ENCODE measurements at regions of chr14 and their contacts with region 1.

Region 1: GRCh38 chr14:90060312-90060964 is 1.4 kb upstream of the KCNK13 start:
- DNase-seq: peak; percentile 49
- H3K4me3 Mint-ChIP-seq: peak overlapping the region; percentile 71
- H3K27ac Mint-ChIP-seq: no peak overlapping the region
- H3K4me1 Mint-ChIP-seq: peaks cover 19% of the 10 kb centered on the region
- H3K27me3 Mint-ChIP-seq: peaks cover 72% of the 10 kb centered on the region

Region 2: DNA sequence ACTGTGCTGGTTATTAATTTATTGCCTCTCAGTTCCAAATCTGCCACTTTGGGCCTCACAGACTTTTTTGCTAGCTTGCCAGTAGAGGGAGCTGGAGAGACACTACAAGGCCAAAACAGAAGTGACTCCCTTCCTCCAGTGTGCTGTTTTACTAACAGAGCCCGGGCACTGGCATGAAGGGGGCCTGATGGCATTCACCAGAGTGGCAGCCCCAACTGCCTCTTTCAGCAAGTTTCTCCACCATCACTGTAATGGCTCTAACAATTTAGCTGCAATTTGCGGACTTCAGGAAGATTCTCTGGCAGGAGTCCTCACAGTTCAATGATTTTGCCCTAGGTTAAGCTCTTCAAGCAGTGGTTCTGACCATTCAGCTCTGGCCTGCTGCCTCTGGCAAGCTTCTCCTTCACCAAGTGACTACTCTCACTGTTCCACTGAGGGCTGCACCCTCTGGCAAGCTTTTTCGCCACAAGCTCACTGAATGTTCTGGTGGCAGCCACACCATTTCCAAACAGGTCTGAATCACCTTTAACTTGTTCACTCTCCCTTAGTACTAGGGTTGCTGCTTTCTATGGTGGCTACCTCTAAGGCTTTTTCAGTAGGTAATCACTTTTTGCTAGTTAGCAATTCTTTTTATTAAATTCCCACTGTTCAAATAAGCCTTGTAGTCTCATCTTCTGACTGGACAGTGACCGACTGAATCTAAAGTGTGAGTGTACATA is 1392.7 kb before region 1 on chr14:
- intact Hi-C with region 1: no loop called
- DNase-seq: peak; percentile 22
- H3K4me3 Mint-ChIP-seq: no peak overlapping the region
- H3K27ac Mint-ChIP-seq: no peak overlapping the region
- H3K4me1 Mint-ChIP-seq: no peaks in the 10 kb centered on the region
- H3K27me3 Mint-ChIP-seq: no peaks in the 10 kb centered on the region

Region 3: DNA sequence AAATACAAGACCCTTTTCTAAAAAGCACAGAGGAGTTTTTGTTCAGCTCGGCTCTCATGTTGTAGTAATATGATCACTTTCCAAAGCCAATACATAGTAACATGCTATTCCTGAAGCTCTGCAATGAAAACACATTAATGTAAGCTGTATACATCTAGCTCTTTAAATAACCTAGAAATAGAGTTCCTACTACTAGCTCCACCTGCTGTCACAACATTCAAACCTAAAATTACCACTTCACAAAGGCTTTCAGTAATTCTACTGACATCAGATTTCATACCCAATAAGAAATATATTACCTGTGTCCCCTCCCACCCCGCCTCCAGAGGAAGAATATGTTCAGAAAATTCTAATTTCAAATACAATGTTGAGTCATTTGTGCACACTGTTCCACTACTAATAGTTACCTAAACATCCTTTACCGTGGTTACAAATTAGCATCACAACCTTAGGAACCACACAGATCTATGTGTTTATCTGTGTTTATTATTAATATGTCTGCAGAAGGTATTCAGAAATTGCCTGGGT is 123.7 kb before region 1 on chr14:
- intact Hi-C with region 1: loop called (anchors 2 kb)
- DNase-seq: no peak
- H3K4me3 Mint-ChIP-seq: no peak overlapping the region
- H3K27ac Mint-ChIP-seq: no peak overlapping the region
- H3K4me1 Mint-ChIP-seq: peaks cover under 1% of the 10 kb centered on the region
- H3K27me3 Mint-ChIP-seq: no peaks in the 10 kb centered on the region

Region 4: GRCh38 chr14:89954070-89955028 is 106.1 kb before region 1 on chr14 and contains the start of gene EFCAB11:
- intact Hi-C with region 1: loop called (anchors 5 kb)
- DNase-seq: peak; percentile 96
- H3K4me3 Mint-ChIP-seq: peak within 1 kb of the TSS; percentile 87
- H3K27ac Mint-ChIP-seq: peak within 1 kb of the TSS; percentile 81
- H3K4me1 Mint-ChIP-seq: peaks cover 43% of the 10 kb centered on the region
- H3K27me3 Mint-ChIP-seq: no peaks in the 10 kb centered on the region
- total RNA-seq, gene EFCAB11: 7.1 and 9.0 TPM in 2 replicates

Region 5: GRCh38 chr14:89973234-89973823 is 87.1 kb before region 1 on chr14:
- intact Hi-C with region 1: loop called (anchors 2 kb)
- DNase-seq: no peak
- H3K4me3 Mint-ChIP-seq: no peak overlapping the region
- H3K27ac Mint-ChIP-seq: no peak overlapping the region
- H3K4me1 Mint-ChIP-seq: peaks cover 4% of the 10 kb centered on the region
- H3K27me3 Mint-ChIP-seq: no peaks in the 10 kb centered on the region

Region 6: DNA sequence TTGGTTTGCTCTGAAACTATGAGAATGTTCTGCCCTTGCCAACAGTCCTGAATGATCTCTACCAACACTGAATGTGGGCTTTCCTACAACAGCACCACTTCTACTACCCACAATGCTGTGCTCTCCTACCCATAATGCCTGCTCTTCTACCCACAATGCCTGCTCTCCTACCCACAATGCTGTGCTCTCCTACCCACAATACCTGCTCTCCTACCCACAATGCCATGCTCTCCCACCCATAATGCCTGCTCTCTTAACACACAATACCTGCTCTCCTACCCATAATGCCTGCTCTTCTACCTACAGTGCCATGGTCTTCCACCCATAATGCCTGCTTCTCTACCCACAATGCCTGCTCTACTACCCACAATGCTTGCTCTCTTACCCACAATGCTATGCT is 93.7 kb after region 1 on chr14:
- intact Hi-C with region 1: no loop called
- DNase-seq: no peak
- H3K4me3 Mint-ChIP-seq: no peak overlapping the region
- H3K27ac Mint-ChIP-seq: no peak overlapping the region
- H3K4me1 Mint-ChIP-seq: no peaks in the 10 kb centered on the region
- H3K27me3 Mint-ChIP-seq: no peaks in the 10 kb centered on the region

Region 7: DNA sequence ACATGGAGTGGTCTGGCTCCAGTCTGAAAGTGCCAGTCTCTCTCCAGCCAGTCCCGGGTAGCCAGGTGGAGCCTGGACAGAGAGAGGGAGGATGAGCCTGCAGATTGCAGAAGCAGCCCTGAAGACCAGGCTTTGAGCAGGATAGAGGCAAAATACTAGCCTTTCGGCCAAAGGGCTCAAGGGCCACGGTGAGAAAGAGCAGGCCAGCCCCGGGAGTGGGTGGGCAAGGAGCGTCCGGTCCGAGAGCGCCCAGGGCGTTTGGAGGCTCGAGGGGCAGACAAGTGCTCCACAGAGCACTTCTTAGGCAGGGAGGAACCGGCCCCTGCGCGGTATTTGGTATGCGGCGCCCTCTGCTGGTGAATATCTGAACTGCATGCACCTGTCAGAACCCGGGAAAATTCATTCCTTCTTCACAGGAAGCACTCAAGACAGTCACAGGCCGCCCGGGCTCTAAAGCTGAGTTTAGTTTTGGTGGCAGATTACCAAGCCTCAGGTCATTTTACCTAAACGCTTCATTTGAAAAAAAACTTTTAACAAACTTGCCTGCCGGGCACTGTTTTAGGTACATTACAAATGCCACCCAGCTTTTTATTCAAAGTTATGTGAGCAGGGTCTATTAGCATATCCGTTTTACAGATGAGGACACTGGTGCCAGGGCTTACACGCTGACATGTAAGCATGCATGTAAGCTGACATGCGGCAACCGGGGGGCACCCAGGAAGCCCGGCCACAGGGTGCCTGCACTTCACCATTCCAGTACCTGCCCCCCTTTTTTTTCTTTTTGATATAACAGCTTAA is 174.9 kb after region 1 on chr14:
- intact Hi-C with region 1: loop called (anchors 10 kb)
- DNase-seq: peak; percentile 58
- H3K4me3 Mint-ChIP-seq: no peak overlapping the region
- H3K27ac Mint-ChIP-seq: no peak overlapping the region
- H3K4me1 Mint-ChIP-seq: peaks cover 3% of the 10 kb centered on the region
- H3K27me3 Mint-ChIP-seq: peaks cover 9% of the 10 kb centered on the region

Region 8: DNA sequence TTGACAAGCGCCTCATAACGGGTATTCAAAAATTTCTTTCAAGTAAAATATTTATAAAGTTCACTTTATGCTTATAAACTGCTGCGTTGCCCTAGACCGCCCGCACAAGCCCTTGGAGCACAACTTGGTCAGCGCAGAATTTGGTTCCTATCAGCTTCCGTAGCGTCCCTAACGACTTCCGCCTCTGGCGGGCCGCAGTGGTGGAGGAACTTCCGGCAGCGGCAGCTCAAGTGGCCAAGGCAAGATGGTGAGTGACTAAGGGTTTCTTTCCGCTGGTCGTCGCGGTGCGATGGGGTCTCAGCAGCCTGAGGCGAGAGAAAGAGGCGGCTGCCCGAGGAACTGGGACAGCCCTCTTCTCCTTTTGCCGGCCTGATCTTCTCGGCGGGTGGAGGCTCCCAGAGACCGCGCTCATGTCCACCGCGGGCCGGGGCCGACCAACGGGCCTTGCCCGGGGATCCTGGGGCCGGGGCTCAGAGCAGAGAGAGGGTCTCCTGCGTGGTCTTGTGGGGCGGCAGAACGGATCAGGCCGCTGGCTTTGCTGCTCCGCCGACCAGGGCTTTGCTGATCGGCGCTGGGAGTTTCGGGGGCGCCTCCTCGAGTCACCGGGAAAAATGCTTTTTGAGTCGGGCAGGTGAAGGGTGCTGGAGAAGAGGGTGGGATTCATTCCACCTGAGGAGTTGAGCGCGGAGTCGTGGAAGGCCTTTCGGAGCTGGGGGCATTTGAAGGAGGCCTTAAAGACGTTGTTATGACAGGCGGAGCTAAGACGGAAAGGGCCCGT is 196.1 kb after region 1 on chr14 and contains the start of gene PSMC1:
- intact Hi-C with region 1: loop called (anchors 1 kb)
- DNase-seq: peak; percentile 83
- H3K4me3 Mint-ChIP-seq: peak within 1 kb of the TSS; percentile 98
- H3K27ac Mint-ChIP-seq: peak within 1 kb of the TSS; percentile 93
- H3K4me1 Mint-ChIP-seq: peaks cover 19% of the 10 kb centered on the region
- H3K27me3 Mint-ChIP-seq: no peaks in the 10 kb centered on the region
- total RNA-seq, gene PSMC1: 162 and 167 TPM in 2 replicates

Measured in activated T-helper 2 cell treated with anti-CD3 and anti-CD28 coated beads, Interferon-gamma antibody, Interleukin-2, Interleukin-4, amounts not matched to agents 10 μg/mL and 5 μg/mL and 100 μg/mL, durations not matched to agents 14 hours and 24 hours and 36 hours (primary cell).